Activated naive CD4-positive, alpha-beta T cell treated with anti-CD3 and anti-CD28 coated beads, Interleukin-2, amount 10 ng/mL, durations not matched to agents 7 days and 5 days (primary cell): ENCODE measurements at regions of chr12 and their contacts with region 1.

Region 1: DNA sequence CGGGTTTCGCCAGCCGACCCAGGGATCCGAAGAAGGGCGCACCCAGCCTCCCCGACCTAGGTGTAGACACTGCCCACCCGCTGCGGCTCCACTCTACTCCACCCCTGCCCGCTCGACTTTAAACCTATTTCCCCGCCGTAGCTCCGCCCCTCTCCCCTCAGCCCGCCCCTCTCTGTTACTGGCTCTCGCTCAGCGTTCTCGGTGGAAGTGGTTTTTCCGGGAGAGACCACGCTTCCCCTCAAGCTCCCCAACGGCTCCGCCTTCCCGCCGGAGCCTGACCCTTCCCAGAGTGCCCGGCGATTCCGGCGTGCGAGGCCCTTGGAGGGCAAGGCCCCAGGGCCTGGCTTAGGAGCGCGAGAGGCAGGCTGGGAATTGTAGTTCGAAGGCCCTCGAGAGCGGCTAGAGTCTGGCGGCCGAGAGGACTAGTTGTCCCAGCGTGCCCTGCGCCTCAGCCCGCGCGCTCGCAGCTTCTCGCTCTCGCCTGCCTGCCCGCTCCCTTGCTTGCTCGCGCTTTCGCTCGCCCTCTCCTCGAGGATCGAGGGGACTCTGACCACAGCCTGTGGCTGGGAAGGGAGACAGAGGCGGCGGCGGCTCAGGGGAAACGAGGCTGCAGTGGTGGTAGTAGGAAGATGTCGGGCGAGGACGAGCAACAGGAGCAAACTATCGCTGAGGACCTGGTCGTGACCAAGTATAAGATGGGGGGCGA is at the start of gene PA2G4:
- DNase-seq: peak; percentile 99
- H3K4me3 Mint-ChIP-seq: peak within 1 kb of the TSS; percentile 97
- H3K27ac Mint-ChIP-seq: peak within 1 kb of the TSS; percentile 99
- H3K4me1 Mint-ChIP-seq: peaks cover 59% of the 10 kb centered on the region
- H3K27me3 Mint-ChIP-seq: peaks cover 6% of the 10 kb centered on the region

Region 2: DNA sequence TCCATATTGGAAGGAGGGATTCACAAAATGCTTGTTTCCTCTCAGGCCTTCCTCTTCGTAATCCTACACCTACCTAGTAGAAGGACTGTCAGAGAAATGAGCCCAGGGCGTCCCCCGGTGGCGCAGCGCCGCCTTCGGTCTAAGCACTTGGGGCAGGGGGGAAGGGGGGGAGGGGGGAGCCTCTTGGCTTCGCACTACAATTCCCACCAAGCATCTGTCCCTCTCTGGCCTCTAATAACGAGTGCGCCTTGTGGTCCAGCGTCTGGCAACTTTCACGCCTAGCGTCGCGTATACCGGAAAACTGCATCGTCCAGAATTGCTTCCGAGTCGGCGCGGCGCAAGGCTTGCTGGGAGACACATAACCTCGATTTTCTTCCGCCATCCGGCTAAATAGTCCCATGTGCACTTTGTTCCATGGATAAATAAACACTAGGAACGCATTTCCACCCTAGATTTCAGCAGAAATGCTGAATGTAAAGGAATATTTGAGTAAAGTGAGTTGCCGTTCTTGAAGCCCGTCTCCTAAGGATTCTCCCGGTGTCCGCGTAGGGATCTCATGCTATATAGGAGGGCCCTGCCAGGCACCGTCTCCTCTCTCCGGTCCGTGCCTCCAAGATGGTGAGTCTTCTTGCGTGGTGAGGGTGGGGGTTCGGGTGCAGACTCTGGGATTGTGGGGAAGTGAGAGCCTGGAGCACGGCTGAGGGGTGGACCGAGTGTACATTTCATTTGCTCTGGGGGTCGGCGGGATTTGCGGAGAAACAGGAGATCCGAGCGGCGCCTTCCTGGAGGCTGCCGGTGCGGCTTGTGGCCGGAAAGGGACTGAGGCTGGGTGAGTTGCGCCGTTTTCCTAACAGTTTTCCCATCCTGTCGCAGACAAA is 62.5 kb before region 1 on chr12 and contains the start of gene RPS26:
- CTCF ChIA-PET with region 1: interaction called, 33 read pairs
- DNase-seq: peak; percentile 95
- H3K4me3 Mint-ChIP-seq: peak within 1 kb of the TSS; percentile 92
- H3K27ac Mint-ChIP-seq: peak within 1 kb of the TSS; percentile 91
- H3K4me1 Mint-ChIP-seq: peaks cover 54% of the 10 kb centered on the region
- H3K27me3 Mint-ChIP-seq: peaks cover 3% of the 10 kb centered on the region

Region 3: GRCh38 chr12:56079665-56080555 is 24.4 kb before region 1 on chr12 and contains the start of gene ERBB3:
- CTCF ChIA-PET with region 1: interaction called, 64 read pairs
- DNase-seq: peak; percentile 80
- H3K4me3 Mint-ChIP-seq: peak within 1 kb of the TSS; percentile 76
- H3K27ac Mint-ChIP-seq: no peak within 1 kb of the TSS
- H3K4me1 Mint-ChIP-seq: peaks cover 24% of the 10 kb centered on the region
- H3K27me3 Mint-ChIP-seq: peaks cover 77% of the 10 kb centered on the region

Region 4: GRCh38 chr12:56146492-56147460 is 42.5 kb after region 1 on chr12:
- CTCF ChIA-PET with region 1: no interaction called
- DNase-seq: no peak
- H3K4me3 Mint-ChIP-seq: no peak overlapping the region
- H3K27ac Mint-ChIP-seq: no peak overlapping the region
- H3K4me1 Mint-ChIP-seq: peaks cover 43% of the 10 kb centered on the region
- H3K27me3 Mint-ChIP-seq: no peaks in the 10 kb centered on the region